ENCODE measurements at regions of chr16 and their contacts with region 1.

Region 1: DNA sequence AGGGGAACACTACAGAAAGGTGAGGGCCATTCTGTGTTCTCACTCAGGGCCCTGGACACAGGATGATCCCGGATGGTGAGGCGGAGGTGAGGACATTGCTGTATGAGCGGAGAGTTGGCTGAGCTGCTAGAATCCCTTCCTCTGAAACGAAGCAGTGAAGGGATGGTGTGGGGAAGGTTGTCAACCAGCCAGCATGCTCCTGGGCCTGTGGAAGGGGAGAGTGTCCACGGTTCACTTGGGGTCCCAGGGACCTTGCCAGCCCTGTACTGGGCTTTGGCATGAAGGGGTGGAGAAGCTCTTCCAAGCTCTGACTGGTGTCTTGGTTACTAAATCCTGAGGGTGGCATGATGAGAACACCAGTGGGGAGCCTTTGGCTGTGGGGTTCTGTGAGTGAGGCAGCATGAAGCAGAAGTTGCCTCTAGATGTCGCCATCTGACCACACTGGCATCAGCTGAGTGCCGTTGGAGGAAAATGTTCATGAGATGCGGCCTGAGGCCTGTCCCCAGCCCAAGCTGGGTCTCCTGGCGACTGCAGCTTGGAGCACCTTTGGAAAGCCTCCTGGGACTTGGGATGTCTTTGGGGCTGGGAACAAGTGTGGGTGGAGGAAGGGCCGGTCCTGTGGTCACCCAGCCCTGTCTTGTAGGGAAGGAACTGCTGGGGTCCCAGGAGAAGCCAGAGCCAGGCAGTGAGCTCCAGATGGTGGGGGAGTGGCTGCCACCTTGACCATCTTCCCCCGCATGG is 14.8 kb downstream of the PDP2 start:
- DNase-seq: peak; percentile 75 to 90 (median 83)
- H3K4me3 ChIP-seq: no peak overlapping the region
- H3K27ac ChIP-seq: no peak overlapping the region
- H3K4me1 ChIP-seq: peaks cover 16 to 25% of the 10 kb centered on the region in 2 donors
- H3K27me3 ChIP-seq: no peaks in the 10 kb centered on the region
- CTCF ChIP-seq: peak; percentile 76 to 93 (median 86)
- POLR2A ChIP-seq: no peak

Region 2: GRCh38 chr16:66696669-66697630 is 198.2 kb before region 1 on chr16 and contains the start of gene CMTM4:
- intact Hi-C with region 1: no loop called
- DNase-seq: peak; percentile 82 to 90 (median 89)
- H3K4me3 ChIP-seq: peak within 1 kb of the TSS in 3 of 4 donors; percentile 33 to 86 (median 55)
- H3K27ac ChIP-seq: peak within 1 kb of the TSS in 3 of 5 donors; percentile 33 to 73 (median 47)
- H3K4me1 ChIP-seq: peaks cover 8 to 10% of the 10 kb centered on the region in 2 donors
- H3K27me3 ChIP-seq: no peaks in the 10 kb centered on the region
- CTCF ChIP-seq: peak in 1 of 6 experiments; percentile 20
- POLR2A ChIP-seq: peak in 1 of 2 donors; percentile 33
- total RNA-seq, gene CMTM4: 14.3 to 35.3 (median 20.9) TPM

Region 3: GRCh38 chr16:66934153-66934838 is 39.2 kb after region 1 on chr16 and contains the start of gene CIAO2B:
- intact Hi-C with region 1: loop called in 1 of 2 experiments (anchors 5 kb)
- DNase-seq: peak; percentile 86 to 95 (median 92)
- H3K4me3 ChIP-seq: peak within 1 kb of the TSS; percentile 80 to 89 (median 82)
- H3K27ac ChIP-seq: peak within 1 kb of the TSS; percentile 54 to 97 (median 85)
- H3K4me1 ChIP-seq: peaks cover 20 to 42% of the 10 kb centered on the region in 2 donors
- H3K27me3 ChIP-seq: no peaks in the 10 kb centered on the region
- CTCF ChIP-seq: no peak
- POLR2A ChIP-seq: peak; percentile 78 to 93
- total RNA-seq, gene CIAO2B: 80.7 to 177 (median 94.7) TPM

Region 4: DNA sequence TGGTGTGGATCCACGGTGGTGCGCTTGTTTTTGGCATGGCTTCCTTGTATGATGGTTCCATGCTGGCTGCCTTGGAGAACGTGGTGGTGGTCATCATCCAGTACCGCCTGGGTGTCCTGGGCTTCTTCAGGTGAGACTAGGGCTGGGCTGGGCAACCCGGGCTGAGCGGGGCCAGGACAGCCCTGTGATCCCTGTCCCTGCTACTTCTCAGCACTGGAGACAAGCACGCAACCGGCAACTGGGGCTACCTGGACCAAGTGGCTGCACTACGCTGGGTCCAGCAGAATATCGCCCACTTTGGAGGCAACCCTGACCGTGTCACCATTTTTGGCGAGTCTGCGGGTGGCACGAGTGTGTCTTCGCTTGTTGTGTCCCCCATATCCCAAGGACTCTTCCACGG is 45.1 kb after region 1 on chr16:
- intact Hi-C with region 1: loop called in 1 of 2 experiments (anchors 5 kb)
- DNase-seq: no peak
- H3K4me3 ChIP-seq: no peak overlapping the region
- H3K27ac ChIP-seq: no peak overlapping the region
- H3K4me1 ChIP-seq: peaks cover 13 to 27% of the 10 kb centered on the region in 2 donors
- H3K27me3 ChIP-seq: no peaks in the 10 kb centered on the region
- CTCF ChIP-seq: no peak
- POLR2A ChIP-seq: no peak

Measured in adrenal gland (tissue), 19 donors.